Activated CD4-positive, alpha-beta T cell treated with anti-CD3 and anti-CD28 coated beads for 36 hours (primary cell): ENCODE measurements at regions of chr1 and their contacts with region 1.

Region 1: DNA sequence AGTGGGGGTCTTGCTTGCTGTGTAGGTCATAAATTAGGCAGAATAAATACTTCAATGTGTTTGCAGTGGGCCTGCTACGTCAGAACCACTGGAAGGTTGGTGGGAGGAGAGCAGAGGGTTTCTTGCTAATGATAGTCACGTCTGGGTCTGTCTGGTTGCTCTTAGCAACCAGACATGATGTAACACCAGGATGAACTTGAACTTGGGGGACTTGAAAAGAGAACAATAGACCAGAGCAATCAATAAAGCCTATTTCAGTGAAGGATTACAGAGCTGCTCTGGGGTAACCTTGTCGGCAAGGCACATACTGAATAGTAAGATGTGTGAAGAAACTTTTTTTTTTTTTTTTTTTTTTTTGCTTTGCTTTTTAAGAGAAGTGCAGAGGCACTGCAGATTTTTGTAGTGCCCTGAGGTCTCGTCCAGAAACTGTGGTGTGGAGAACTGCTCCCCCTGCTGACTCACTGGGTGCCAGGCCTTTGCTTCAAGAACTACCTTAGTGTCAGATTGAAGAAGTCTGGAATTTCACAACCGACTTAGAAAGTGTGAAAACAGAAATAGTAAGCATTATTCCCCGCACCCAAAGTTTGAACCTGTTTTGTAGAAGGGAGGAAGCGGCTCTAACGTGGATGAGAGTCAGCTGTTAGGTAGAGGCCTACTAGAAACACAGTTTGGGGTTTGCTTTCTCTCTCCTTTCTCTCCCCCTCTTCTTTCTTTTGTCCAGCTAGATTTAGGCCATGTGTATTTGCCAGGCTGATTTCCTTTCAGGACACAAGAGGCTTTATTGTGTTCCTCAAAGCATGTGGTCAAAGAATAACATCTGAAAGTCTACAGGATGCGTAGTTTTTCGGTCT is 271.6 kb downstream of the TM2D1 start:
- DNase-seq: peak; percentile 84
- ATAC-seq: peak; percentile 94
- H3K4me3 Mint-ChIP-seq: no peak overlapping the region
- H3K27ac Mint-ChIP-seq: peak overlapping the region; percentile 14
- H3K4me1 Mint-ChIP-seq: peaks cover 12% of the 10 kb centered on the region
- H3K27me3 Mint-ChIP-seq: no peaks in the 10 kb centered on the region

Region 2: DNA sequence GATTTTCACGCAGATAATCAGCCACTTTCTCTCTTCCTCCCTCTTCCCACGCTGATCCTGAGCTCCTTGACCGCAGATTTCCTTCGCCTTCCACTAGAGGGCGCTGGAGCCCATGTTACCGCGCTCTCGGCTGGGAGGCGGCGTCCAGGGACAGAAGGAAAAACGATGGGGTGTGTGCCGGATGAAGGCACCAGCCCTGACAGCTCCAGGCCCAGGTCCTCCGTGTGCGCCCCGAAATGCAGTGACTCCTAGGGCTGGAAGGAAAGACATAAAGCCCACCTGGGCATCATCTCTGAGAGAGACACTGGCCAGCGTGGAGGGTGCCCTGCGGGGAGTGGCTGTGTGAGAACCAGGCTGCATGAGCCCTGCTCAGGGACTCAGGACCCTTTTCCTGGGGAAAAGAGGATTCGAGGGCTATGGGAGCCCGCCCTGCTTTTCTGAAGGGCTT is 1481.8 kb before region 1 on chr1:
- CTCF ChIA-PET with region 1: interaction called, 3 read pairs
- POLR2A ChIA-PET with region 1: no interaction called
- intact Hi-C with region 1: loop called in 1 of 2 experiments (anchors 2 kb)
- DNase-seq: peak; percentile 74
- ATAC-seq: peak; percentile 47
- H3K4me3 Mint-ChIP-seq: no peak overlapping the region
- H3K27ac Mint-ChIP-seq: no peak overlapping the region
- H3K4me1 Mint-ChIP-seq: peaks cover 5% of the 10 kb centered on the region
- H3K27me3 Mint-ChIP-seq: peaks cover 21% of the 10 kb centered on the region

Region 3: GRCh38 chr1:60848583-60849188 is 604.6 kb before region 1 on chr1:
- CTCF ChIA-PET with region 1: no interaction called
- POLR2A ChIA-PET with region 1: no interaction called
- intact Hi-C with region 1: loop called in 1 of 2 experiments (anchors 1 kb)
- DNase-seq: no peak
- ATAC-seq: no peak
- H3K4me3 Mint-ChIP-seq: no peak overlapping the region
- H3K27ac Mint-ChIP-seq: no peak overlapping the region
- H3K4me1 Mint-ChIP-seq: no peaks in the 10 kb centered on the region
- H3K27me3 Mint-ChIP-seq: peaks cover 10% of the 10 kb centered on the region

Region 4: GRCh38 chr1:60978421-60979357 is 474.6 kb before region 1 on chr1:
- CTCF ChIA-PET with region 1: interaction called, 4 read pairs
- POLR2A ChIA-PET with region 1: no interaction called
- intact Hi-C with region 1: loop called (anchors 1 to 5 kb)
- DNase-seq: peak; percentile 54
- ATAC-seq: peak; percentile 80
- H3K4me3 Mint-ChIP-seq: no peak overlapping the region
- H3K27ac Mint-ChIP-seq: no peak overlapping the region
- H3K4me1 Mint-ChIP-seq: peaks cover 2% of the 10 kb centered on the region
- H3K27me3 Mint-ChIP-seq: peaks cover under 1% of the 10 kb centered on the region

Region 5: GRCh38 chr1:61028136-61028535 is 425.2 kb before region 1 on chr1:
- CTCF ChIA-PET with region 1: no interaction called
- POLR2A ChIA-PET with region 1: no interaction called
- intact Hi-C with region 1: no loop called
- DNase-seq: no peak
- ATAC-seq: no peak
- H3K4me3 Mint-ChIP-seq: no peak overlapping the region
- H3K27ac Mint-ChIP-seq: no peak overlapping the region
- H3K4me1 Mint-ChIP-seq: no peaks in the 10 kb centered on the region
- H3K27me3 Mint-ChIP-seq: no peaks in the 10 kb centered on the region

Region 6: GRCh38 chr1:61270761-61271411 is 182.4 kb before region 1 on chr1:
- CTCF ChIA-PET with region 1: no interaction called
- POLR2A ChIA-PET with region 1: no interaction called
- intact Hi-C with region 1: loop called in 1 of 2 experiments (anchors 10 kb)
- DNase-seq: peak; percentile 49
- ATAC-seq: peak; percentile 86
- H3K4me3 Mint-ChIP-seq: no peak overlapping the region
- H3K27ac Mint-ChIP-seq: peak overlapping the region; percentile 76
- H3K4me1 Mint-ChIP-seq: peaks cover 40% of the 10 kb centered on the region
- H3K27me3 Mint-ChIP-seq: peaks cover 5% of the 10 kb centered on the region

Region 7: DNA sequence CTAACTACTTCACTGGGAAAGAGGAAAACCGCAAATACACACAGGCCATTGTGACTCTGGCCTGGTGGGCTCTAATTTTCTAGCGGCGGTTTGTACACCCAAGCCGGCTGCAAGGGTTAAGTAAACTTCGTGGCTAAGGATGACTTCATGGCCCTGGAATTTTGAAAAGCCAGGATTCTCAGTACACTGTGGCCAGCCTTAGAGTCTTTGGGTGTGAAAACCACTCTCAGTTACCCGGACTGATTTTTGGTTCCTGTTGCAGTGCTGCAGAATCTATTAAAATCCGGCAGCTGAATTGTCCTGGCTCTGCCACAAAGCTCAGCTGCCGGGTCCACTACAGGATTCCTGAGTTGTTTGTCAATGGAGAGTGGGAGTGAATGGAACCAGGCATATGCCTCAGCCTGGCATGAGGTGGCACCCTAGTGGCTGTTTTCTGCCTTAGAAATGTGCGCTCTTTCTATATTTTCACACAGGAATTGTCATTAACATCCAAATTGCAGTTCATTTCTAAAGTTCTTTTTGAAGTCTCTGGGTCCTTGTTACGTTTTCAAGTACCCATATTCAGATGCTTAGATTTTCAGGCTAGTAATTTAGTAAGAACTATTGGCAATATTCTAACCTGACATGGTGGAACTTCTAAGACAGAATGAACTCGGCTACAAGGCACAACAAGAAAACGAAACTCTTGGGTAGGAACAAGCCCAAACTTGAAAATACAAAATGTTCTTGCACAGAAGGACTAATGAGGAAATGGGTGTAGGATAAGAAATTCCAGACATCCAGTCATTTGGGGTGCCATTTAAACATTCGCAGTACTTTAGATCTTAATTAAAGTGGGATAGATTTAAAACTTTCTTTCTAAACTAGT is 115.1 kb before region 1 on chr1:
- CTCF ChIA-PET with region 1: interaction called, 3 read pairs
- POLR2A ChIA-PET with region 1: no interaction called
- intact Hi-C with region 1: loop called in 1 of 2 experiments (anchors 5 kb)
- DNase-seq: no peak
- ATAC-seq: no peak
- H3K4me3 Mint-ChIP-seq: no peak overlapping the region
- H3K27ac Mint-ChIP-seq: no peak overlapping the region
- H3K4me1 Mint-ChIP-seq: peaks cover under 1% of the 10 kb centered on the region
- H3K27me3 Mint-ChIP-seq: peaks cover 2% of the 10 kb centered on the region

Region 8: GRCh38 chr1:61588736-61589672 is 135.7 kb after region 1 on chr1:
- CTCF ChIA-PET with region 1: interaction called, 4 read pairs
- POLR2A ChIA-PET with region 1: no interaction called
- intact Hi-C with region 1: loop called in 1 of 2 experiments (anchors 5 kb)
- DNase-seq: peak; percentile 81
- ATAC-seq: peak; percentile 97
- H3K4me3 Mint-ChIP-seq: no peak overlapping the region
- H3K27ac Mint-ChIP-seq: no peak overlapping the region
- H3K4me1 Mint-ChIP-seq: no peaks in the 10 kb centered on the region
- H3K27me3 Mint-ChIP-seq: peaks cover 5% of the 10 kb centered on the region

Region 9: DNA sequence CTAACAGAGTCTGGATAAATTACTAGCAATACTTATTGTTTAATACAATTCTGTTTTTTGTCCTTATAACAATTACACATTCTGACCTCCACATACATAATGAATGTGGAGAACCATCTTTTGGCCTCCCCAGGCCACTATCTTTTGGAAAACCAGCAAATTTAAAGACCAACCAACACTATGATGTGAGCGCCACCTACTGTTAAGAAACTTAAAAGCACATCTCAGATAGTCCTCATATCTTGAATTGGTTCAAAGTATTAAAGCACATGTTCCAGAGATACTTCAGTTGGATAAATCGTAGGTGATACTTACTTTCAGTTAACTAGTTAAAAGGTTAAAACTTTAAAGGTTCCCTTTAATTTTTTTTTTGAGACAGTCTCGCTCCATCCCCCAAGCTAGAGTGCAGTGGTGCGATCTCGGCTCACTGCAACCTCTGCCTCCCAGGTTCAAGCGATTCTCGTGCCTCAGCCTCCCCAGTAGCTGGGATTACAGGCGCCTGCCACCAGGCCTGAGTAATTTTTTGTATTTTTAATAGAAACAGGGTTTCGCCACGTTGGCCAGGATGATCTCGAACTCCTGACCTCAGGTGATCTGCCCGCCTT is 954.2 kb after region 1 on chr1:
- CTCF ChIA-PET with region 1: no interaction called
- POLR2A ChIA-PET with region 1: no interaction called
- intact Hi-C with region 1: no loop called
- DNase-seq: no peak
- ATAC-seq: peak; percentile 49
- H3K4me3 Mint-ChIP-seq: no peak overlapping the region
- H3K27ac Mint-ChIP-seq: no peak overlapping the region
- H3K4me1 Mint-ChIP-seq: no peaks in the 10 kb centered on the region
- H3K27me3 Mint-ChIP-seq: no peaks in the 10 kb centered on the region